Calu3 (cell line): ENCODE measurements at regions of chr1 and their contacts with region 1.

Region 1: DNA sequence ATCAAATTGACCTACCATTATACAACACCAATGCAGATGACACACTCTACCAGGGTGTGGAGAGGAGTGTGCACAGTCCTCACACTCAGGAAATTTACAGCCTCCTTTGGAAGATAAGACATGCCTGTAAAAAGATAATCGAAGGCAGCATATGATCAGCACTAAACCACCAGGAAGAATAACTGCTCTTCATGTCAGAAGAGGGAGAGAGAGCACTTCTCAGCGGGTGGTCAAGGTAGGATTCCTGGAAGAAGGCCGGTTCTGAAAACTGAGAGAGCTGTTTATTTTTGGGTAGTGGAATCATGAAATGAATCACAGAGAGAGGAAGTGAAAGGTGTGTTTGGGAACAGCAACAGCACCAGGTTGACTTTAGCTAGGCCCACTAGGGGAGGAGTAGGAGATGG is 14.0 kb upstream of the ZNF697 start:
- DNase-seq: no peak
- H3K4me3 Mint-ChIP-seq: no peak overlapping the region
- H3K27ac Mint-ChIP-seq: no peak overlapping the region
- H3K4me1 Mint-ChIP-seq: peaks cover 34% of the 10 kb centered on the region
- H3K27me3 Mint-ChIP-seq: no peaks in the 10 kb centered on the region
- CTCF ChIP-seq: no peak

Region 2: DNA sequence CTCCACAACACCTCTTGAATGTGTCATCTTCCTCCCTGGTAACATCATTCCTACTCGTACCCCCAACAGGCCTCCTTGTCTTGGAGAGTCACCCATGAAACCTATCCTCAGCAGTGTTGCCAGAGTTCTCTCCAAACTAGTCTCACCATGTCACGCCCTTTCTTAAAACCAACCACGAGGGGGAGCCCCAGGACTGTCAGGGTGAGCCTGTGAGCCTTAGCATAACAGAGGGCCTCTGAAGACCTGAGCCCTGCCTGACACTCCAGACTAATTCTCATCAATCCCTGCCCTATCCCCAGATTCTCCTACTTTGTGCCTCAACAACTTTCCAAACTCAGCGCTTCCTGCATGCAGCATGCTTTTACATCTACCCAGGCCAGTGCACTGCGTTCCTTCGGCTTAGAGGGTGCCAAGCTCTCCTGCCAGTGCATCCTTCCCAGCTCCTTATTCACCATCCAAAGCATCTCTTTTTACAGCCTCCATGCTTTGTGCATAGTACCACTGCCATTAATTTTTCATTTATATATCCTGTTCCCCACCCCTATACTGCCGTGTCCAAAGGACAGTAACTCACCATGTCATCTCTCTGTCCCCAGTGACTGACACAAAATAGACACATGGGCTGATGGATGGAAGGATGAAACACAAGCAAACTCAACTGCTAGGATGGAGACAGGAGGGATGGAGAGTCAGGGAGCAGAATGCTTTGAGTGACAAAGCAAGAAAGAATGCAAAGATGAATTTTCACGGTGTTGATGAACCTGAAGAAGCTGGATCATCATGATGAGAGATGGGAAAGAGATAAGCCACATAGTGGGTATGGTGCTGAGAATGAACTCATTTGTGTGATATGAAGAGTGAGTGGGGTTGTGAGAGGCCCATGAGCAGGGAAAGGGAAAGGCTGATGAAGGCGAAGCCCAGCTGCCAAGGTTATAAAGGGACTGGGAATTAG is 48.0 kb before region 1 on chr1:
- CTCF ChIA-PET with region 1: interaction called, 9 read pairs
- intact Hi-C with region 1: loop called (anchors 1 kb)
- DNase-seq: peak; percentile 88
- H3K4me3 Mint-ChIP-seq: no peak overlapping the region
- H3K27ac Mint-ChIP-seq: no peak overlapping the region
- H3K4me1 Mint-ChIP-seq: peaks cover 6% of the 10 kb centered on the region
- H3K27me3 Mint-ChIP-seq: no peaks in the 10 kb centered on the region
- CTCF ChIP-seq: peak; percentile 65

Region 3: DNA sequence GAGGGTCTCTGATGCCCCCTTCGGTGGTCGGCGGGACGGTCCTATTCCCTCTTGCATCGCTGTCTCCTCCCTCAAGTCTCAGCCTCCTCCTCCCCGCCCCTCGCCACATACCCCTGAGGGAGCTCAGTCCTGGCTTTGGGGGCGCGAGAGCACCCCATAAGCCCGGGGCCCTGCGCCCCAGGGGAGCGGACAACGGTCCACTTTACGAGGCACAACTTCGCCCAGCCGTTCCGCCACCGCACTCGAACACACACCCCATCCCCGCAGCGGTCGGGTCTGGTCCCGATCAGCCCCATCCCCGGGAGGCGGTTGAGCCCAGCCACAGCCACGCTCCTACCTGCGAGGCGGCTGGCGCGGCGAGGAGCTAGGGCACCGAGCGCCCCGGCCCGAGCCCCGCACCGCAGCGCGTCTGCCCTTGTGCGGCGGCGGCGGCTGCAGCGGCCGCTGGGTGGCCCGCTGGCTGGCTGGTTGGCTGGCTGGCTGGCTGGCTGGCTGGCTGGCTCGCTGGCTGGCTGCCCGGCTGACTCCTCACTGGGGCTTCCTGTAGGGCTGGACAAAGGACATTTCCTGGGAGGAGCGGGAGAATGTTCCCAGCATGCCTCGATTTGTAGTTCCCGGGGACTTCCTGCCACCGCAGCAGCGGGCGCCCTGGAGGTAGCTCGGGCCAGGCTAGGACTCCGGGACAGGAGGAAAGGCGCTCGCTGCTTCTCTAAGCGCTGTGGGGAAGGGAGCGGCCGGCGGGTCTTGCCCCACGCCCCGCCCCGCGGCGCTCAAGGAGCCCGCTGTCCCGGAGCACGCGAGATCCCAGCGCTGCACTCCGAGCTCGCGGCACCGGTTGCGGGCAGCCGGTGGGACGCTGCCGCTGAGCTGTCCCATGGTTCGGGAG is 14.1 kb before region 1 on chr1 and contains the start of gene ZNF697:
- CTCF ChIA-PET with region 1: interaction called, 6 read pairs
- intact Hi-C with region 1: loop called (anchors 1 kb)
- DNase-seq: peak; percentile 93
- H3K4me3 Mint-ChIP-seq: peak within 1 kb of the TSS; percentile 98
- H3K27ac Mint-ChIP-seq: peak within 1 kb of the TSS; percentile 74
- H3K4me1 Mint-ChIP-seq: peaks cover 31% of the 10 kb centered on the region
- H3K27me3 Mint-ChIP-seq: peaks cover 8% of the 10 kb centered on the region
- CTCF ChIP-seq: no peak
- total RNA-seq, gene ZNF697: 3.9 and 4.8 TPM in 2 replicates

Region 4: GRCh38 chr1:119686649-119687048 is 24.6 kb after region 1 on chr1:
- CTCF ChIA-PET with region 1: no interaction called
- intact Hi-C with region 1: loop called (anchors 1 kb)
- DNase-seq: peak; percentile 46
- H3K4me3 Mint-ChIP-seq: peak overlapping the region; percentile 26
- H3K27ac Mint-ChIP-seq: peak overlapping the region; percentile 80
- H3K4me1 Mint-ChIP-seq: peaks cover 29% of the 10 kb centered on the region
- H3K27me3 Mint-ChIP-seq: no peaks in the 10 kb centered on the region
- CTCF ChIP-seq: no peak